GM10248 (cell line): ENCODE measurements at regions of chr7 and their contacts with region 1.

Region 1: DNA sequence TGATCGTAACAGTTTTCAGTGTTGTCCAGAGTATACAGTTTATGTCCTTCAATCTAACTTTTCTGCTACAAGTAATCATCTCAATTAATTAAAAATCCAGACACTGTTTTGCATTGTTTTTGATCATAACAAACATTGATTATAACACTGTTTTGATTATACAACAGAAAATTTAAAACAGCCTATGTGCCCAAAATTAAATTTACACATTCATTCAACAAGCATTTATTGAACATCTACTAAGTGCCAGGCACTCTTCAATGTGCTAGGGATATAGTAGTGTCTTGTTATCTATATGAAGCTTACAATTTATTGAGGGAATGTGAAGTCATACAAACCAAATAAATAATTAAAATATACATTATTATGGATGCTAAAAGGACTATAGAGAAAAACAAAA is 10.6 kb downstream of the ELAPOR2 start:
- DNase-seq: no peak
- CTCF ChIP-seq: no peak

Region 2: GRCh38 chr7:87059525-87060287 is 10.9 kb after region 1 on chr7 and contains the start of gene ELAPOR2:
- CTCF ChIA-PET with region 1: interaction called, 11 read pairs
- POLR2A ChIA-PET with region 1: no interaction called
- DNase-seq: peak; percentile 91
- CTCF ChIP-seq: peak; percentile 72

Region 3: DNA sequence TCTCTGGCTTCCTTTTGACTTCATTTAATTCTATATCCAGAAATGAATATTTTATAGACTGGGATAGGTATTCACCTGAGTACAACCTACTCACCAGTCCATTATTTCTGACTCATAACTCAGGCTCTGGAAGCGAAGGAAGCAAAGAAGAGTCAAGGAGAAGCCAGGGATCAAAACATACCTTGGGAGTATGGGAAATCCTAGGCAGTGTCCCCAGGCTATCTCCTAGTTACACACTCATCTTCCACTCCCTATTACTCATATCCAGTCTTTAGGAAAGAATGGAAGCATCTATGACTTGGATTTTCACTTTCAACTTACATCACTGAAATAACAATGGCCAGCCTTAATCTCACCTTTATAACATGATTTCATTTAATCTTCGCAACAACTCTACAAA is 51.5 kb after region 1 on chr7:
- CTCF ChIA-PET with region 1: no interaction called
- POLR2A ChIA-PET with region 1: no interaction called
- DNase-seq: no peak
- CTCF ChIP-seq: no peak